CD8-positive, alpha-beta memory T cell (primary cell): ENCODE measurements at regions of chr14 and their contacts with region 1.

Region 1: DNA sequence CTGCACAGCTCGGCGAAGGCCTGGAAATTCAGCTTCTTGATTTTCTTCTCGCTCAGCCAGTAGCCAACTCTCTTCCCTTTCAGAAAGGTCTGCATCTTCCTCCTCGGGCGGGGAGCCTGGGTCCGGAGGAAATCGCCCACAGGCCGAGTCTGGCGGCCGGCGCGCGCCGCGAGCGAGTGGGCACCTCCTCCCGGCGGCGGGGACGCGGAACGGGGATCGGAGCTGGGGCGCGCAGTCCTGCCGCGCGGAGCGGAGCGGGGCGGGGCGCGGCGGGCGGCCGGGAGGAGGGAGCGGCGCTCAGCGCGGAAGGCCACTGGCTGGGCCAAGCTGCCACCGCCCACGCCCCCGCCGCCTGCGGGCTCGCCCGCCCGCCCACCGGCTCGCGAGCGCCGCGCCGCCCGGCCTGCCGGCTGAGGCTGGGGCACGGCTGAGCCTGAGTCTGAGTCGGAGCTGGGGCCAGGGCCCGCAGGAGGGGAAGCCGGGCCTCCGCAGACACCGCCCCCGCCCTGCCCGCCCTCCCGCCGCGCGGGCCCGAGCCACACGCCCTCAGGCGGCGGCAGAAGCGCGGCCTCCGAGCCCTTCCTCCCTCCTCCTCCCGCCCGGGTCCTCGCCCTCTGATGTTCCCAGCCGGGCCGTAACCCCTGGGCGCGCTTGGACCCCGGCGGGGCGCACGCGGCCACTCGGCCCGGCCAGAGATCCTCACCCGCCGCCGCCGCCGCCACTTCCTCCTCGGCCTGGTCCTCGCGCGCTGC is 480 bp downstream of the ITPK1 start:
- DNase-seq: peak; percentile 79 to 90 (median 87)
- H3K4me3 ChIP-seq: peak overlapping the region; percentile 70
- H3K4me3 Mint-ChIP-seq: peak overlapping the region; percentile 74 to 93 (median 88)
- H3K27ac ChIP-seq: peak overlapping the region; percentile 51
- H3K27ac Mint-ChIP-seq: peak overlapping the region in 7 of 8 donors; percentile 50 to 93 (median 73)
- H3K4me1 ChIP-seq: peaks cover 32% of the 10 kb centered on the region
- H3K4me1 Mint-ChIP-seq: peaks cover 20 to 38% (median 31%) of the 10 kb centered on the region in 3 donors
- H3K27me3 ChIP-seq: no peaks in the 10 kb centered on the region
- H3K27me3 Mint-ChIP-seq: peaks cover 0 to 3% of the 10 kb centered on the region in 2 donors

Region 2: GRCh38 chr14:92207012-92207928 is 908.0 kb before region 1 on chr14:
- CTCF ChIA-PET with region 1: no interaction called
- POLR2A ChIA-PET with region 1: no interaction called
- DNase-seq: no peak
- H3K4me3 ChIP-seq: no peak overlapping the region
- H3K4me3 Mint-ChIP-seq: no peak overlapping the region
- H3K27ac ChIP-seq: no peak overlapping the region
- H3K27ac Mint-ChIP-seq: no peak overlapping the region
- H3K4me1 ChIP-seq: no peaks in the 10 kb centered on the region
- H3K4me1 Mint-ChIP-seq: no peaks in the 10 kb centered on the region
- H3K27me3 ChIP-seq: no peaks in the 10 kb centered on the region
- H3K27me3 Mint-ChIP-seq: peaks cover 2 to 18% of the 10 kb centered on the region in 2 donors

Region 3: DNA sequence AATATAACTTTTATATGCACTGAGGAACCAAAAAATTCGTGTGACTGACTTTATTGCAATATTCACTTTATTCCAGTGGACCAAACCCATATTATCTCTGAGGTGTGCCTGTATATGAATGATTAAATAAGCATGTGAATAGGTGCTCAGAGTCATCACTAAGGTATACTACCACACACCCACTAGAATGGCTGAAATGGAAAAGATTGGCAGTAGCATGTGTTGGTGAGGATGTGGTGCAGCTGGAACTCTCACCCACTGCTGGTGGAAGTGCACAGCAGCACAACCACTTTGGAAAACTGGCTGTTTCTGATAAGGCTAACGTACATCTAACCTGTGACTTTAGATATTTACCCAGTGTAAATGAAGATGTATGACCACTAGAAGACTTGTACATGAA is 284.3 kb before region 1 on chr14:
- CTCF ChIA-PET with region 1: no interaction called
- POLR2A ChIA-PET with region 1: no interaction called
- DNase-seq: no peak
- H3K4me3 ChIP-seq: no peak overlapping the region
- H3K4me3 Mint-ChIP-seq: no peak overlapping the region
- H3K27ac ChIP-seq: no peak overlapping the region
- H3K27ac Mint-ChIP-seq: no peak overlapping the region
- H3K4me1 ChIP-seq: no peaks in the 10 kb centered on the region
- H3K4me1 Mint-ChIP-seq: no peaks in the 10 kb centered on the region
- H3K27me3 ChIP-seq: no peaks in the 10 kb centered on the region
- H3K27me3 Mint-ChIP-seq: peaks cover 0 to 1% of the 10 kb centered on the region in 2 donors

Region 4: DNA sequence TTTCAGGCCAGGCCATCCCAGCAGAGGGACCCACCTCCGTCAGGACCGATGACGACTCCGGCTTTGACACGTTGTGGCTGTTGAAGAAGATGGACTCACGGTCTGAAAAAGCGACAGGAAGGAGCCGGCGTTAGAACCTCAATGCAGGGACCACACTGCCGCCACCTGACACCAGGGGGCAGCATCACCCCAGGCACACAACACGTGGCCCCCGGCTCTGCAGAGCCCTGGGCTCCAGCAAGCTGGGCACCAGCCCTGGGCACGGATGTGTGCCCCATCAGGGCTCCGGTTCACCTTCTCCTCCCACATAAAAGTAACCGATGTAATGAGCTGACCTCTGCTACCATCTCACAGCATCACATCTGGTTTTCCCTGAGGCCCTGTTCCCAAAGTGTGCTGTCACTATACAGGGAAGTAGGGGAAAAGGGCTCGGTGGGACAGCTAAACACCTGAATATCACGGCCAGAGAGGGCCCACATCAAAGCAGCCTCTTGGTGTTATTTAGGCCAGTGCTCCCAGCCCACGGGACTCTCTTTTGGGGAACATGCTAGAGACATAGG is 163.3 kb before region 1 on chr14:
- CTCF ChIA-PET with region 1: interaction called, 17 read pairs
- POLR2A ChIA-PET with region 1: no interaction called
- DNase-seq: peak; percentile 68 to 82 (median 75)
- H3K4me3 ChIP-seq: no peak overlapping the region
- H3K4me3 Mint-ChIP-seq: no peak overlapping the region
- H3K27ac ChIP-seq: no peak overlapping the region
- H3K27ac Mint-ChIP-seq: peak overlapping the region in 2 of 8 donors; percentile 22 to 69
- H3K4me1 ChIP-seq: no peaks in the 10 kb centered on the region
- H3K4me1 Mint-ChIP-seq: peaks cover 5 to 6% (median 6%) of the 10 kb centered on the region in 3 donors
- H3K27me3 ChIP-seq: no peaks in the 10 kb centered on the region
- H3K27me3 Mint-ChIP-seq: no peaks in the 10 kb centered on the region

Region 5: DNA sequence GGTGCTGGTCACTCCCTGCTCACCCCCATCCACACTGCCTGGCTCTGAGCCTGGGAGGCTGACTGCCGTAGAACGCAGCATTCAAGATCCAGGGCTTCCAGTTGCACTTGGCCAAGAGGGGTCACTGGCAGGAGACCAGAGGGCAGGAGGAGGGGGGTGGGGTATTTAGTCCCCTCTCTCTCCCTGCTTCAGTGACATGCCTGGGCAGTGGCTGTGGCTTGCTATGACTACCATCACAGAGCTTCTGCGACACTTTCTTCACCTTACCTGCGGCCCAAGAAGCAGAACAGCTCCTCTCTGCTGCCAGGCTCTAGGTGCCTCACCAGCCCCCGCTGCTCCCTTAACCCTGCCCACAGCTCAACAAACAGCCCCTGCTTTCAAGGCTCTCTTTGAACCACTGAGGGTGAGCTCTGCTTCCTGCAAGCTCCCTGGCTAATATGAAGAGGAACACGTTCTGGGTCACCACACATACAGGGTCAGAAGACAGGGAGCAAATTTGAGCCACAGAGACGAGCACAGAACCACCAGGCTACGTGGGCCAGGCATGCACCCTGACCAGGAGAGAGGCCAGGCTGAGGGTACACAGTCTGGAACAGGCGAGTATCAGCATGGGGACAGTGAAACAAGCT is 55.2 kb before region 1 on chr14:
- CTCF ChIA-PET with region 1: interaction called, 47 read pairs
- POLR2A ChIA-PET with region 1: interaction called, 3 read pairs
- DNase-seq: peak in 1 of 5 donors; percentile 59
- H3K4me3 ChIP-seq: no peak overlapping the region
- H3K4me3 Mint-ChIP-seq: peak overlapping the region in 5 of 7 donors; percentile 2 to 39 (median 23)
- H3K27ac ChIP-seq: no peak overlapping the region
- H3K27ac Mint-ChIP-seq: peak overlapping the region in 6 of 8 donors; percentile 52 to 84 (median 72)
- H3K4me1 ChIP-seq: peaks cover 12% of the 10 kb centered on the region
- H3K4me1 Mint-ChIP-seq: peaks cover 47 to 64% (median 47%) of the 10 kb centered on the region in 3 donors
- H3K27me3 ChIP-seq: no peaks in the 10 kb centered on the region
- H3K27me3 Mint-ChIP-seq: no peaks in the 10 kb centered on the region

Region 6: DNA sequence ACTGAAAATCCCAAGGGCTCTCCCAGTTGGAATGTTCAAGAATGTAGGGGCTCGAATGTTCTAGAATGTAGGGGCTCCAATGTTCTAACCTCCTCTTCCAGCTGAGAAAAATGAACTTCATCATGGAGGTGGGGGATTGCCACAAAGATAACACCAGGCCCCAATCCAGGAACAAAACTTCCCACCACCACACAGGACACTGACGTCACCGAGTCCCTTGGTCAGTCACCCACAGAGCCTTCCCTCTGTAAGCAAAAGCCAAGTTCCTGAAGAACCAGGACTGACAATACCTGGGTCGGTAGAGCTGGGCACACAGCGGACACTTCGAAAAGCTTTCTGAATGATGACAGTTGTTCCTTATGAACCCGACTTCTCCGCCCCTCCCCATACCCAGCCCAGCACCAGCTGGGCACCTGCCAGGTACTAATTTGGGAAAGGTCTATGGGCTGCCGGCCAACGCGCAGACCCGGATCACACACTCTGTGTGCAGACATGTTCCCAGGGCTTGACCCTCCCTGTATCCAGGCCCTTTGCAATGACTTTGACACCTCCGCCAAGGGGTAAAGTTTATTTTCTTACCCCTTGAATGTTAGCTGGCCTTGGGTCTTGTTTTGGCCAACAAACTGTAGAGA is 18.4 kb before region 1 on chr14:
- CTCF ChIA-PET with region 1: interaction called, 62 read pairs
- POLR2A ChIA-PET with region 1: no interaction called
- DNase-seq: no peak
- H3K4me3 ChIP-seq: no peak overlapping the region
- H3K4me3 Mint-ChIP-seq: no peak overlapping the region
- H3K27ac ChIP-seq: no peak overlapping the region
- H3K27ac Mint-ChIP-seq: peak overlapping the region in 1 of 8 donors; percentile 45
- H3K4me1 ChIP-seq: no peaks in the 10 kb centered on the region
- H3K4me1 Mint-ChIP-seq: peaks cover 32 to 63% (median 39%) of the 10 kb centered on the region in 3 donors
- H3K27me3 ChIP-seq: no peaks in the 10 kb centered on the region
- H3K27me3 Mint-ChIP-seq: peaks cover 0 to 3% of the 10 kb centered on the region in 2 donors

Region 7: DNA sequence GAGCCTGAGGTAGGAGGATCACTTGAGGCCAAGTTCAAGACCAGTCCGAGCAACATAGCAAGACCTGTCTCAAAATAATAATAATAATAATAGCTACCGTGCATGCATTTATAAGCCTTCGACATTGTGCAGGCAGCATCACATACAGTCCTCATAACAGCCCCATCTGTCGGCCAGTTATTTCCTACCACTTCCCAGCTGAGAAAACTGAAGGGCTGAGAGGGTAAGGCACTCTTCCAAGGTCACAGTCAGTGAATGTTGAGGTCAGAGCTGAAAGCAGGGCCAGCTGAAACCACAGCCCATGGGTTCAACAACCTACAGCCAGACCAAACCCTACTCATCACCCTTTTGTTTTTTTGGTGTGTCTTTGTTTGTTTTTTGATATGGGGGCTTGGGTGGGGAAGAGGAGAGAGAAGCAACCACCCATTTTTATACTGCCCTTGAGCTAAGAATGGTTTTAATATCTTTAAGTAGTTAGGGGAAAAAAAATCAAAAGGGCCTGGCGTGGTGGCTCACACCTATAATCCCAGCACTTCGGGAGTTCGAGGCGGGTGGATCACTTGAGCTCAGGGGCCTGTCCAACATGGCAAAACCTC is 17.3 kb after region 1 on chr14:
- CTCF ChIA-PET with region 1: interaction called, 81 read pairs
- POLR2A ChIA-PET with region 1: interaction called, 6 read pairs
- DNase-seq: peak in 4 of 5 donors; percentile 3 to 53 (median 22)
- H3K4me3 ChIP-seq: no peak overlapping the region
- H3K4me3 Mint-ChIP-seq: no peak overlapping the region
- H3K27ac ChIP-seq: no peak overlapping the region
- H3K27ac Mint-ChIP-seq: peak overlapping the region in 1 of 8 donors; percentile 22
- H3K4me1 ChIP-seq: no peaks in the 10 kb centered on the region
- H3K4me1 Mint-ChIP-seq: no peaks in the 10 kb centered on the region
- H3K27me3 ChIP-seq: no peaks in the 10 kb centered on the region
- H3K27me3 Mint-ChIP-seq: peaks cover 2 to 3% of the 10 kb centered on the region in 2 donors

Region 8: DNA sequence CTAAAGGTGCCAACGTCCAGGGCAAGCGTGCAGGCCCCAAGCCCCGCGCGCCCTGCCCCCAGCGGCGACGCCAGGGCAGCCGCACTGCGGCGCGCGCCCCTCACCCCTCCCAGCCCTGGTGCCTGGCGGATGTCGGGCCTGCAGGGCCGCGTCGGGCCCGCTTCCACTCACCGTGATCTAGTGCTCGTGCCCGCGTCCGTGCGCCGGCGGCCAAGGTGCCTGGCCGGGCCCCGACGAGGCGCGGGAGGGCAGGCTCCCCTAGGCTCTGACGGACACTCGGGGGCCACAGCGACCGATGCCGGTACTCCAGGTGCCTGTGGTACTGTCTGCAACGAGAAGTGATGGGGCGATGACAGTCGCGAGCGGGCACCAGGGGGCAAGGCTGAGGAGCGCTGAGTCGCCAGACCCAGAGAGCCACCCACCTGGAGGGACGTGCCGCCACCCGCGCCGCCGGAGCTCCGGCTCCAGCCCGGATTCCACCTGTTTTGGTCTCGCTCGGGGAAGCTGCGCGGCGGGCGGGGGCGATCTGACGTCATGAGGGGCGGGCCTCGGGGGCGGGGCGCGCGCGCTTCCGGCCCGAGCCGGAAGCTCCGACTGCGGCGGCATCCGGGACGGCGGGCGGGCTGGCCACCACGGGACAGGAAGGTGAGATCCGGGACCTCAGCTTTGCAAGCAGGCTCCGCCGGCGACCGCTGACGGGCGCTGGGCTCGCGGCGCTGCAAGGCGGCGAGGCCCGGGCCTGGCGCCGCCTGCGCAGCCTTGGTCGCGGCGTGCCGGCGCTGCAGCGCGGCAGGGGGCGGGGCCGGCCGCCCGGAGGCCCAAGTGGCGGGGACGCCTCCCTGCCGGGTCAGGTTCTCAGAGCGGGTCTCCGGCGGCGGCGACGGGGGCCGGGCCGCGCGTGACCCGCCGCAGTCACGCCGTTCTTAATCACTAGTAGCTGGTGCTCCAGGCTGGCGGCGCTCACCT is 69.4 kb after region 1 on chr14 and contains the starts of genes LYSET and MOAP1:
- CTCF ChIA-PET with region 1: interaction called, 33 read pairs
- POLR2A ChIA-PET with region 1: interaction called, 36 read pairs
- DNase-seq: peak; percentile 89 to 95 (median 90)
- H3K4me3 ChIP-seq: peak within 1 kb of the TSS; percentile 95
- H3K4me3 Mint-ChIP-seq: peak within 1 kb of the TSS; percentile 91 to 97 (median 94)
- H3K27ac ChIP-seq: peak within 1 kb of the TSS; percentile 98
- H3K27ac Mint-ChIP-seq: peak within 1 kb of the TSS; percentile 93 to 99 (median 98)
- H3K4me1 ChIP-seq: peaks cover 31% of the 10 kb centered on the region
- H3K4me1 Mint-ChIP-seq: peaks cover 33 to 47% (median 45%) of the 10 kb centered on the region in 3 donors
- H3K27me3 ChIP-seq: no peaks in the 10 kb centered on the region
- H3K27me3 Mint-ChIP-seq: no peaks in the 10 kb centered on the region
- total RNA-seq, gene LYSET: 19.3 to 20.5 TPM
- total RNA-seq, gene MOAP1: 16.7 to 17.4 TPM

Region 9: DNA sequence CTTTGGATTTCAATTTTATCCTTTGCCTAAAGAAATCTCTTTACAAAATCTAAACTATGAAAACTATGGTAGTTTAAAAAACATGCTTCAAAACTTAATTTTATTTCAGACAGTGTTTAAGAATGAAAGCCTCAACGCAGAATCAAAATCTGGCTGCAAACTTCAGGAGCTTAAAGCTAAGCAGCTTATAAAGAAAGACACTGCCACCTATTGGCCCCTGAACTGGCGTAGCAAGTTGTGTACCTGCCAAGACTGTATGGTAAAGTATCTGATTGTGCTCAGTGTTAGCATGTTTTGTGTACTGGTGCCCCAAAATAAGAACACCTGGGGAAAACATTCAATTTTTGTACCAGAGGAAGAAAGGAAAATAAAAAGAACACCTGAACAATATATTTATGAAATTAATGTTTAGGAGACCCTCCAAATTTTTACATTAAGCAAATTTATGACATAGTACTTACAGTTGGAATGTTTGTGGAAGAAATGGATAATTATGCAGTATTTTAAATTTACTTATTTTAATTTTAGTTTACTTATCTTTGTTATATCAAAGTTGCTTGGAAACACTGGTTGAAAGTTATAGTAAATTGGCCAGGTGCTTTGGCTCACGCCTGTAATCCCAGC is 104.0 kb after region 1 on chr14:
- CTCF ChIA-PET with region 1: interaction called, 10 read pairs
- POLR2A ChIA-PET with region 1: no interaction called
- DNase-seq: peak; percentile 12 to 68 (median 23)
- H3K4me3 ChIP-seq: no peak overlapping the region
- H3K4me3 Mint-ChIP-seq: no peak overlapping the region
- H3K27ac ChIP-seq: no peak overlapping the region
- H3K27ac Mint-ChIP-seq: no peak overlapping the region
- H3K4me1 ChIP-seq: no peaks in the 10 kb centered on the region
- H3K4me1 Mint-ChIP-seq: no peaks in the 10 kb centered on the region
- H3K27me3 ChIP-seq: no peaks in the 10 kb centered on the region
- H3K27me3 Mint-ChIP-seq: no peaks in the 10 kb centered on the region

Region 10: DNA sequence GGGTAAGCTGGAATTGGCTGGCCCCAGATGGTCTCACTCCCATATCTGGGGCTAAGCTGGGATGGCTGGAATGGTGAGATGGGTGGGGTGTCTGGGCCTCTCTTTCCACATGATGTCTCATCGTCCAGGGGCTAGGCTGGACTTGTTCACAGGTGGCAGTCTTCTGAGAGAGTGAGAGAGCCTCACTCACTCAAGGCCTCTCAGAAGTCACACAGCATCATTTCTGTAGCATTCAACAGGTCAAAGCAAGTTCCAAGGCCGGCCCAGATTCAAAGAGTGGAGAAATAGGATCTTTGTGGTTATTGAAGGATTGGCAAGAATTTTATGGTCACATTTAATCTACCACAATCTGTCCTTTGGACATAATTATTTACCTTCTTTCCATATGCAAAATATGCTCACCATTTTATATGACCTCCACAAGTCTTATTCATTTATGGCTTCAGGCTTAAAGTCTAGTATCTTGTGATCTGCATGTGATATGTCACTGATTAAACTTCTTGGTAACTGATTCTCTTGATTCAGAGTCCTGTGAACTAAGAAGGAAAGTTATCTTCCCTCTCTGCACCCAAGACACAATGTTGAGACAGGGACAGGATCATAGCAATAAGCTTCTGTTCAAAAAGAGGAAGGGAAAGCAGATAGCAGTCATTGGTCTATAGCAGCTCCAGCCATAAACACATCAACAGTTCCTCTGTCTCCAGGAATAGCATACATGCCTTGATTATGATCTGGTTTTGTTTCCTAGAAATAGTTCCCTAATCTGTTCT is 418.4 kb after region 1 on chr14:
- CTCF ChIA-PET with region 1: no interaction called
- POLR2A ChIA-PET with region 1: no interaction called
- DNase-seq: no peak
- H3K4me3 ChIP-seq: no peak overlapping the region
- H3K4me3 Mint-ChIP-seq: no peak overlapping the region
- H3K27ac ChIP-seq: no peak overlapping the region
- H3K27ac Mint-ChIP-seq: no peak overlapping the region
- H3K4me1 ChIP-seq: no peaks in the 10 kb centered on the region
- H3K4me1 Mint-ChIP-seq: no peaks in the 10 kb centered on the region
- H3K27me3 ChIP-seq: no peaks in the 10 kb centered on the region
- H3K27me3 Mint-ChIP-seq: peaks cover 3 to 34% of the 10 kb centered on the region in 2 donors